Thyroid gland (tissue), 4 donors: ENCODE measurements at regions of chr19 and their contacts with region 1.

Region 1: GRCh38 chr19:6297202-6297601 is 17.4 kb upstream of the MLLT1 start:
- DNase-seq: no peak
- H3K4me3 ChIP-seq: no peak overlapping the region
- H3K27ac ChIP-seq: no peak overlapping the region
- H3K4me1 ChIP-seq: no peaks in the 10 kb centered on the region
- H3K27me3 ChIP-seq: no peaks in the 10 kb centered on the region
- CTCF ChIP-seq: no peak
- POLR2A ChIP-seq: no peak

Region 2: GRCh38 chr19:6164906-6165531 is 132.2 kb before region 1 on chr19:
- intact Hi-C with region 1: loop called (anchors 5 kb)
- DNase-seq: no peak
- H3K4me3 ChIP-seq: no peak overlapping the region
- H3K27ac ChIP-seq: no peak overlapping the region
- H3K4me1 ChIP-seq: no peaks in the 10 kb centered on the region
- H3K27me3 ChIP-seq: no peaks in the 10 kb centered on the region
- CTCF ChIP-seq: no peak
- POLR2A ChIP-seq: no peak

Region 3: DNA sequence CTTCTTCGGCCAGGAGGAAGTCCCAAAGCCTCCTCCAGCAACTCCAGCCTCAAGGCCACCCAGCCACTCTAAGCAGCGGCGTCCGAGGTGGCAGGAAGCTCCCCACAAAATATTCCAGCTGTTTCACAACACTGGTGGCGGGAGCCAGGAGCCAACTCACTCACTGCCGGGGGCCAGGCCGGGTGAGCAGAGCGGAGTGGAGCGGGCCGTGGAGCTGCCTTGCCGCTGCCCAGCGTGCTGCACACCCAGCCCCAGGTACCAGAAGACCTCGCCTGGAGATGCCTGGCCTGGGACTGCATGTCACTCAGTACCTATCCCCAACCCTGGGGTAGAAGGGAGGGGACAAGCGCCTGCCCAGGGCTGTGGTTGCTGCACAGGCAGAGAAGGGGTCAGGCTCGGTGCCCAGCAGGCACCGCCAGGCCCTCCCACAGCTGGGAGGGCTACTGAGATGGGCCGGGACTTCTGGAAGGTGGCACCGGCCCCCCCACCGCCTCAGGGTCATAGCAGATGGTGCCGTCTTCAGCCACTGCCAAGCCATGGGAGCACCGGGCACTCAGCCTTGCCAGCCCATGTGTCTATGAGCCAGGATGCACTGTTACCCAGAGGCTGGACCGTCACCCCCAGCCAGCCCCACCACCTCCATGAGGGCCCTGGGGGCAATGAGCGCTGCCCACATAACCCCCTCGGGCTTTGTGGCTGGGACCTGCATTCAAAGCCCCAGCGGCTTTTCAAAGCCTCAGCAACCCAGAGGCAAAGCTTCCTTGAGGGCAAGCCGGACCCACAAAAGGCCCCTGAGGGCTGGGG is 76.6 kb before region 1 on chr19:
- intact Hi-C with region 1: loop called (anchors 2 kb)
- DNase-seq: no peak
- H3K4me3 ChIP-seq: no peak overlapping the region
- H3K27ac ChIP-seq: no peak overlapping the region
- H3K4me1 ChIP-seq: peaks cover 50 to 68% of the 10 kb centered on the region in 2 donors
- H3K27me3 ChIP-seq: no peaks in the 10 kb centered on the region
- CTCF ChIP-seq: no peak
- POLR2A ChIP-seq: no peak

Region 4: GRCh38 chr19:6540918-6541689 is 243.9 kb after region 1 on chr19:
- intact Hi-C with region 1: no loop called
- DNase-seq: no peak
- H3K4me3 ChIP-seq: no peak overlapping the region
- H3K27ac ChIP-seq: no peak overlapping the region
- H3K4me1 ChIP-seq: no peaks in the 10 kb centered on the region
- H3K27me3 ChIP-seq: no peaks in the 10 kb centered on the region
- CTCF ChIP-seq: no peak
- POLR2A ChIP-seq: no peak